Activated CD4-positive, alpha-beta T cell treated with anti-CD3 and anti-CD28 coated beads for 36 hours (primary cell): ENCODE measurements at regions of chr4 and their contacts with region 1.

Region 1: DNA sequence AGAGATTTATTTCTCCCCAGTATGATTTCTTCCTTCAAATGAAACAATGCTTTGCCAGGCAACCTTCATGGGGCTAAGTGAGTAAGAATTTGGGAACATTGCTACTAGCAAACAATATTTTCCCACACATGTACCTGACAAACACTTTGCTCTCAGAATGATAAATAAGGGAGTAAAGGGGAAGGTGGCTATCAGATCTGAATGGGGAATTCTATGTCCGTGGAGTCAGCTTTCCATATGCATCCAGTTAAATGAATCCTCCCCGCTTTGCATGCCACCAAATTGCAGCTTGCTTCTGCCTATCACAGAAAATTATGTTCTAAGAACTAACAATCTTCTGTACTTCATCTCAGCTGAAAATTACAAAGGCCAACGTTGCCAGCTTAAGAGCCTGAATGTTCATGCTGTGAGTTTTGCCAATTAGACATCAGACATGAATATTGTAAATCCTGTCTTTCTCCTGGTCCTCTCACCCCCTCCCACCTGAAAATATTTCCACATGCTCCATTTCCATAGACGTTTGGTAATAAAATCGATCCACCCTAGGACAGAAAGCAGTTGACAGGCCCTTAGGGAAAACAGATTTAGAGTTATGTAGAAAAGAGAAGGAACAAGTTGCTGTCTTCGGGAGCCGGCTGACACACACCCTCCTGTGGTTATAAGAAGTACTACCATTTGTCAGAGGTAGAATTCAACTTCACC is 6.3 kb downstream of the MEPE start:
- DNase-seq: peak; percentile 32
- ATAC-seq: no peak
- H3K4me3 Mint-ChIP-seq: no peak overlapping the region
- H3K27ac Mint-ChIP-seq: no peak overlapping the region
- H3K4me1 Mint-ChIP-seq: no peaks in the 10 kb centered on the region
- H3K27me3 Mint-ChIP-seq: peaks cover 10% of the 10 kb centered on the region

Region 2: GRCh38 chr4:87679449-87680169 is 159.4 kb before region 1 on chr4:
- CTCF ChIA-PET with region 1: interaction called, 6 read pairs
- POLR2A ChIA-PET with region 1: no interaction called
- intact Hi-C with region 1: loop called (anchors 1 to 2 kb)
- DNase-seq: peak; percentile 62
- ATAC-seq: no peak
- H3K4me3 Mint-ChIP-seq: no peak overlapping the region
- H3K27ac Mint-ChIP-seq: no peak overlapping the region
- H3K4me1 Mint-ChIP-seq: no peaks in the 10 kb centered on the region
- H3K27me3 Mint-ChIP-seq: peaks cover 2% of the 10 kb centered on the region